AG04449 (cell line): ENCODE measurements at regions of chr7 and their contacts with region 1.

Region 1: DNA sequence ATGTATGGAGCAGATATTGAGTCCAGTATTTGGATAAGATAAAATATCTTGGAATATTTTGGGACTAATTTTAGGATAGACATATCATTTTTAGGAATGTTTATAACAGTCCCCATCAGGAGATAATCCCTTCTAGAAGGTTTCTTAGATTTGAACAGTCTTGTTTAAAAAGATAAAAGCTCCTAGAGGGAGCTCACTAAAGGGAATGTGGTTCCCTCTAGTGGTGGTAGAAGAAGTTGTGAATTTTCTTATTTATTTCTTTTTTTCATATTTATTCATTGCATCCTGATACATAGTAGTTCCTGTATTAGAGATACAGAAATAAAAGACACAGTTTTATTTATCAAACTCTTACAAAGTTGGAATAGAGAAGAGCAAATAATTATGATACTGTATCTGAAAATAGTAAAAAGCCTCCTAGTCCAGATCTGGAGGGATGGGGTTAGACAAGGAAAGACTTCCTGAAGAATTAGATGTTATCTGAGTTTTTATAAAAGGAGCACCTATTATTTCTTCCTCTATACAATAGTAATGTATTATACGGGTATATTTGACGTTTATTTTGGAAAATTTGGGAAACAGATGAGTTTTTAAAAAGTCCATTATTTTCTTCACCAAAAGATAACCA is 24.5 kb upstream of the KLF14 start:
- DNase-seq: peak; percentile 14
- H3K4me3 ChIP-seq: no peak overlapping the region
- CTCF ChIP-seq: peak; percentile 32

Region 2: DNA sequence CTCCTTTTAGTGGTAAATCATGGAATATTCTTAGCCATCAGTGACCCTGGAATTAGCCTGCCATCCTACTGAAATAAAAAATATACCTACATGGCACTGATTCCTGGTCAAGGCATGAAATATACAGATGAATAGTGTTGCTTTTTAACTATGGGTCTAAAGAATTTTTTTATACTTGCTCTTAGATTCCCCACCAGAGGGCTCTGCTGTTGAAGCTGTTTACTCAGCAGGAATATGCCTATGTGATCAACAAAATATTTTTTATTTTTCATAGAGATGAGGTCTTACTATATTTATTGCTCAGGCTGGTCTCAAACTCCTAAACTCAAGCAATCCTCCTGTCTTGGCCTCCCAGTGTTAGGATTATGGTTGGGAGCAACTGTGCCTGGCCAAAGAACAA is 720.8 kb before region 1 on chr7:
- CTCF ChIA-PET with region 1: interaction called, 16 read pairs
- POLR2A ChIA-PET with region 1: no interaction called
- DNase-seq: no peak
- H3K4me3 ChIP-seq: no peak overlapping the region
- CTCF ChIP-seq: peak; percentile 2

Region 3: DNA sequence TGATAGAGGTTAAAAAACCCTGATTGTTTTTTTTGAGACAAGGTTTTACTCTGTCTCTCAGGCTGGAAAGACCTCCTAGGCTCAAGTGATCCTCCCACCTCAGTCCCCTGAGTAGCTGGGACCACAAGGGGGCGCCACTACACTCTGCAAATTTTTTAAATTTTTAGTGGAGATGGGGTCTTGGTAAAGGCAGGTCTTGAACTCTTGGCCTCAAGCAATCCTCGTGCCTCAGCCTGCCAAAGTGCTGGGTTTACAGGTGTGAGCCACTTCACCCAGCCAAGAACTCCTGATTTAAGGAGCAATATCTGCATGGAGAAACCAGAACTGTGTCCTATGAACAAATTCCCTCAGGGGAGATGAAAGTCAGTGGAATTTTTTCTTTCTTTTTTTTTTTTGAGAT is 695.5 kb before region 1 on chr7:
- CTCF ChIA-PET with region 1: interaction called, 20 read pairs
- POLR2A ChIA-PET with region 1: no interaction called
- DNase-seq: no peak
- H3K4me3 ChIP-seq: no peak overlapping the region
- CTCF ChIP-seq: peak; percentile 71

Region 4: DNA sequence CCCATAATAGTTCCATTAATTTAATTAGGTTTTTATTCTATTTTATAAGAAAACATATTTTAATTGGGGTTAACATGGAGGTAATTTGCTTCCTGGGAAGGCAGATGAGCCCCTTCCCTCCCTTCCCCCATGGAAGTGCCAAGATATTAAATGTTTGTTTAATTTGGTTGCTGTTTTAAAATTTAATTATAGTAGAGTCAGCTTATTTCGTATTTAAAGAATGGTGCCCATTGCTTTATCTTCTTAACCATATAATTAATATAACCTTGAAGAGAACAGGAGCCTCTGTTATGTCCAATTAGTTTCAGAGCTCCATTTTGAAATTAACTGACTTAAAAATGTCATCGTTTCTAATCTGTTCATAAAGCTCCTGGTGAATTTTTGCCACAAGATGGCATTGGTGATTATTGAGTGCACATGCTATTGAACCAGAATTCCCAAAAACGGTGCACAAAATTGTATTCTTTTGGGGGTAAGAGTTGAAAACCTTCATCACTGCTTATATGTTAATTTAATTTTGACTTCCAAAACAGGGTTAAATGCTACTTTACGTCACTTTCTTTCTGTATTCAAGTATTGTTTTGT is 662.2 kb before region 1 on chr7:
- CTCF ChIA-PET with region 1: interaction called, 25 read pairs
- POLR2A ChIA-PET with region 1: no interaction called
- DNase-seq: no peak
- H3K4me3 ChIP-seq: no peak overlapping the region
- CTCF ChIP-seq: peak; percentile 26

Region 5: GRCh38 chr7:130721486-130722280 is 36.9 kb before region 1 on chr7:
- CTCF ChIA-PET with region 1: interaction called, 11 read pairs
- POLR2A ChIA-PET with region 1: no interaction called
- DNase-seq: no peak
- H3K4me3 ChIP-seq: no peak overlapping the region
- CTCF ChIP-seq: peak; percentile 66

Region 6: DNA sequence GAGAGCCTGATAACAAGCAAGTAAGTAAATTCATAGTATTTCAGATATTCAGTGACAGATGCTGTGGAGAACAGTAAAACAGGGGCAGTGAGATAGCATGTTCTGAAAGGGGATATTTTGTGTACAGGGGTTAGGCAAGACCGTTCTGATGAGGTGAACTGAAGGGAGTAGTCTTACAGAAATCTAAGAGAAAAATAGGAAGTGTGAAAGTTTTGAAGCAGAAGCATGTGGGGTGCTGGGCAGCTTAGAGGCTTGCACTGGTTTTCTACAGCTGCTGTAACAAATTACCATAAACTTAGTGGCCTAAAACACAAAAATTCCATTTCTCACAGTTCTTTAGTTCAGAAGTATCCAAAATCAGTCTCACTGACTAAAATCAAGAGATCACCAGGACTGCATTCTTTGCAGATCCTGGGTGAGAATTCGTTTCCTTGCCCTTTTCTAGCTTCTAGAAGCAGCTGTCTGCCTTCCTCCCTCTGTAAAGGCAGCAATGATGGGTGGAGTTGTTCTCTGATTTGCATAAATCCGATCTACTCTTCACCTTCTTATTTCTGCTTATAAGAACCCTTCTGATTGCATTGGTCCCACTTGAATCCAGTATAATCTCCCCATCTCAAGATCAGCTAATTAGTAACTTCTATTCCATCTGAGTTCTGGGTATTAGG is 17.1 kb before region 1 on chr7:
- CTCF ChIA-PET with region 1: interaction called, 11 read pairs
- POLR2A ChIA-PET with region 1: no interaction called
- DNase-seq: no peak
- H3K4me3 ChIP-seq: no peak overlapping the region
- CTCF ChIP-seq: no peak